ENCODE measurements at regions of chr12 and their contacts with region 1.

Region 1: GRCh38 chr12:91811481-91812287 is 334.0 kb downstream of the BTG1 start:
- DNase-seq: peak; percentile 79
- H3K4me3 ChIP-seq: no peak overlapping the region
- H3K27ac ChIP-seq: no peak overlapping the region
- H3K4me1 ChIP-seq: no peaks in the 10 kb centered on the region
- H3K27me3 ChIP-seq: no peaks in the 10 kb centered on the region
- CTCF ChIP-seq: peak; percentile 60 to 72
- POLR2A ChIP-seq: no peak

Region 2: DNA sequence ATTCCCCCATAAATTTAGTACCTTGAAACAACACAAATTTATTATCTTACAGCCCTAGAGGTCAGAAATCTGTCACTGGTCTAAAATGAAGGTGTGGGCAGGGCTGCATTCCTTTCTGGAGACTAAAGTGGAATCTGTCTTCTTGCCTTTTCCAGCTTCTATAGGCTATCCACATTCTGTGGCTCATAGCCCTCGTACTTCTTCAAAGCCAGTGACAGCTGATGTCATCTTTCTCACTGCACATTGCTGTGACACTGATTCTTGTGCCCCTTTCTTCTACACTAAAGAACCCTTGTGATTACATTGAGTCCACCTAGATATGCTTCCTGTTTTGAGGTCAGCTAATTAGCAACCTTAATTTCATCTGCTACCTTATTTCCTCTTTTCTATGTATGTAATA is 605.9 kb before region 1 on chr12:
- CTCF ChIA-PET with region 1: no interaction called
- POLR2A ChIA-PET with region 1: no interaction called
- dilution Hi-C with region 1: no loop called
- intact Hi-C with region 1: no loop called
- DNase-seq: no peak
- H3K4me3 ChIP-seq: no peak overlapping the region
- H3K27ac ChIP-seq: no peak overlapping the region
- H3K4me1 ChIP-seq: no peaks in the 10 kb centered on the region
- H3K27me3 ChIP-seq: no peaks in the 10 kb centered on the region
- CTCF ChIP-seq: no peak
- POLR2A ChIP-seq: no peak

Region 3: GRCh38 chr12:91289906-91290305 is 521.8 kb before region 1 on chr12:
- CTCF ChIA-PET with region 1: no interaction called
- POLR2A ChIA-PET with region 1: no interaction called
- dilution Hi-C with region 1: no loop called
- intact Hi-C with region 1: no loop called
- DNase-seq: peak; percentile 36
- H3K4me3 ChIP-seq: no peak overlapping the region
- H3K27ac ChIP-seq: no peak overlapping the region
- H3K4me1 ChIP-seq: no peaks in the 10 kb centered on the region
- H3K27me3 ChIP-seq: no peaks in the 10 kb centered on the region
- CTCF ChIP-seq: no peak
- POLR2A ChIP-seq: no peak

Region 4: DNA sequence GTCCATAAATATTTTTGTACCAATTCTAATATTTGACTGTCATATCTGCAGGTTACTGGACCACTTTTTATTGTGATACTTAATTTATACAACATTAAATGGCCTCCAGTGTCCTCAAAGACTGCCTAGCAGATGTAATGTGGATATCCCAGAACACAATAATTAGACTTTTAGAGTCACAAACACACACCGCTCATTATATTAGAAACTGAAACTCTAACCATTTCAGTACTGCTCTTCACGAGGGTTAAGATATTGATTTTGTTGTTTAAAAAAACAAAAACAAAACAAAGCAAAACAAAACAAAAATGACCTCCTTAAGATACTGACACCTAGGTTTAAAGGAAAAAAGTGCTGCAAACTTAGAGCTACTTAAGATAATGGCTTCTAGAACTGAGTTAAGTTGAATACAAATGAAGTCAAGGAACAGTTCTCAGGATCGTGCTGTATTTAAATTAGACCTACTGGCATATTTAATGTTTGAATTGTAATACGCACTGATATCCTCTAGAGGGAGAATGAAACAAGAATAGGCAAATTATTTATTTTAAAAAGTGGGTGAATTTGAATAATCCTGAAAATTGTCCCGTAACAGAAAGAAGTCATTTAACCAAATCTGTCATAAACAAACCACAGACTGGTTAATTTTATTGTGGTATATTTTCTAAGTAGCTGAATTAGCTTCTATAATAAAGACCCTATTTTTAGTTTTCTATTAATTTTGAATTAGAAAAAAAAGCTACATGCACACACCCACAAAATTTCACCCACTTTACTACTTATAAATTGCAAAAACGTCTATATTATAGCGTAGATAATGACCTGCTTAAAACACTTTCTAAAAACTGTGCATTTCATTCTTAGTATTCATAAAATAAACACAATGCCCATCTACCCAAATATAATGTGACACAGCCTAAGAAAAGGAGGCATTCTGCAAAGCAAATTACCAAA is 233.8 kb before region 1 on chr12:
- CTCF ChIA-PET with region 1: interaction called, 11 read pairs
- POLR2A ChIA-PET with region 1: no interaction called
- dilution Hi-C with region 1: no loop called
- intact Hi-C with region 1: no loop called
- DNase-seq: peak; percentile 61
- H3K4me3 ChIP-seq: peak overlapping the region in 1 of 3 experiments; percentile 73
- H3K27ac ChIP-seq: no peak overlapping the region
- H3K4me1 ChIP-seq: peaks cover 4% of the 10 kb centered on the region
- H3K27me3 ChIP-seq: no peaks in the 10 kb centered on the region
- CTCF ChIP-seq: peak; percentile 20 to 21
- POLR2A ChIP-seq: no peak

Region 5: DNA sequence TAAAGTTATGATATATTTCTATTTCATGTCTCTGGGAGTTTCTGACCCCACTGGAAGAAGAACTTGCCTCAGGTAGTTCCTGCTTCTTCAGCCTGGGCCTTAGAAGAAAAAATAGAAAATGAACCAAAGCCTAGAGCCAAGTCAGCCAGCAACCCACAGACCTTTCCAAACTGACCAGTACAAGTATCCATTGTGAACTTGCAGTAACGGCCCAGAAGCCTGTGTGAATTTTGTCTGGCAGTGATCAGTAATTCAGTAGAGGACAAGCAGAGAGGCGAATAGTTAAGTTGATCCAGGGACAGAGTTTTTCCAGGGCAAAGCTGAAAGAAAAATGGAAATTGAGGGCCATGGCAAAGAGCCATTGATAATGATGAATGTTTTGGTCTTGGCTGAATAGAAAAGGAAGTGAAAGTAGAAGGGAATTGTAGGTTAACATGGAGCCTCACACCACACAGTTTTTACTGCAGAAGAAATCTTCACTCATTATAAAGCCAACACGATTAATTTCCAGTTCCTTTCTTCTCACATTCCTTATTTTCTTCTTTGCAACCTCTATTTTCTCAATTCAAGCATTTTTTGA is 22.2 kb after region 1 on chr12:
- CTCF ChIA-PET with region 1: interaction called, 11 read pairs
- POLR2A ChIA-PET with region 1: no interaction called
- dilution Hi-C with region 1: no loop called
- intact Hi-C with region 1: no loop called
- DNase-seq: peak; percentile 7
- H3K4me3 ChIP-seq: no peak overlapping the region
- H3K27ac ChIP-seq: no peak overlapping the region
- H3K4me1 ChIP-seq: no peaks in the 10 kb centered on the region
- H3K27me3 ChIP-seq: no peaks in the 10 kb centered on the region
- CTCF ChIP-seq: no peak
- POLR2A ChIP-seq: no peak

Region 6: GRCh38 chr12:91985002-91985787 is 173.5 kb after region 1 on chr12:
- CTCF ChIA-PET with region 1: interaction called, 29 read pairs
- POLR2A ChIA-PET with region 1: no interaction called
- dilution Hi-C with region 1: no loop called
- intact Hi-C with region 1: loop called (anchors 2 kb)
- DNase-seq: peak; percentile 13
- H3K4me3 ChIP-seq: no peak overlapping the region
- H3K27ac ChIP-seq: no peak overlapping the region
- H3K4me1 ChIP-seq: peaks cover 55% of the 10 kb centered on the region
- H3K27me3 ChIP-seq: no peaks in the 10 kb centered on the region
- CTCF ChIP-seq: no peak
- POLR2A ChIP-seq: no peak

Region 7: DNA sequence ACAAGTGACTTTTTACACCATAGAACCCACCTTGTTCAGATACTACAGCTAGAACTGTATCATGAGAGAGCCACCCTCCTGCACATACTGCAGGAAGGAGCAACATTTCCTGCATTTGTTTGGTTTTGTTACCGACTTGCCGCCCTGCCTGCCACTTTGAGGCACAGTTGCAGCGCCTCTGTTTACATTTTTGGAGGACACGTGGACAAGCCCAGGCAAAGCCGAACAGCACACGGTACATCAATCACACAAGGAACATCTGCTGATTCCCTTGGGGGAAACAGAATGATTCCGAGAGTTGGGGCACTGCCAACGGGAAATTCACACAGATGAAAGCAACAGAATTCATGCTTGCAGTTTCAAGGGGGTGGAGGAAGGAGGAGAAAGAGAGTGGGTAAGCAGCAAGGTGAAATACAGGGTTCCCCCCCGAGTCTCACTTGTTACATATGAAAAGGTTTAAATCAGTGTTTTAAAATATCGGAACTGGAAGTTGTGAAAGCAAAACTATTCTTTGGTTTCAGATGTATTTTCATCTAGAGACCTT is 223.2 kb after region 1 on chr12:
- CTCF ChIA-PET with region 1: interaction called, 10 read pairs
- POLR2A ChIA-PET with region 1: no interaction called
- dilution Hi-C with region 1: no loop called
- intact Hi-C with region 1: no loop called
- DNase-seq: peak; percentile 87
- H3K4me3 ChIP-seq: peak overlapping the region in 1 of 3 experiments; percentile 21
- H3K27ac ChIP-seq: peak overlapping the region; percentile 22
- H3K4me1 ChIP-seq: peaks cover 17% of the 10 kb centered on the region
- H3K27me3 ChIP-seq: no peaks in the 10 kb centered on the region
- CTCF ChIP-seq: no peak
- POLR2A ChIP-seq: no peak

Region 8: DNA sequence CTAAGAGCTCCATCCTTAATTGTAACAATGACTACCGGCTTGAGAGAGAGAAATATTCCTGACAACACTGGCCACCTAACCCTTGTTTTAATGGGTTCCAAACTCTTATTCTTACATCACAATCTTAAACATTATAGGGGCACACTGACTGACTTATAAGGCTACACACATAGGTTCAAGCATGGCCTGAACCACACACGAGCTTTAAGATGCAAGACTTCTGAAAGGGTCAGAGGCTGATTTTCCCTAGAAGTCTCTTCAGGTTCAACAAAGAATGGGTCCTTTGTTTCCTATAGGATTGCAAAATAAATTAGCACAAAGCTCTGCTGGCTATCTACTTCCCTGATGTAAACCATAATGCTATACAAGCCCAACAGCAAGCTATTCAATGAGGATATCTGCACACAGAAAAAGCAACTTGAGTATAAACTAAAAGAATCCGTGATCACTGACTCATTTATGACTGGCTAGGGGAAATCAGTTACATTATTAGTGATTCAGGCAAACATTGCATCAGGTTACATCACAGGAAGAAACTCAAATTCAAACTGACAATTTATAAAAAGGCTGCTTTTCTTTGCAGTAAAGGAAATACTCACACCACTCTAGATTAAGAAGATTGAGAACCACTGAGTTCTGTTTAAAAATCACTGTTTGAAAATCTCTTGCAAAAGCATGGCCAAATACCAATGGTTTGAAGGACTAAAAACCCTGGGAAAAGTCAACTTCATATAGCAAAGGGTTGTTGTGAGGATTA is 325.5 kb after region 1 on chr12:
- CTCF ChIA-PET with region 1: interaction called, 111 read pairs
- POLR2A ChIA-PET with region 1: interaction called, 6 read pairs
- dilution Hi-C with region 1: no loop called
- intact Hi-C with region 1: no loop called
- DNase-seq: peak; percentile 68
- H3K4me3 ChIP-seq: no peak overlapping the region
- H3K27ac ChIP-seq: peak overlapping the region; percentile 49
- H3K4me1 ChIP-seq: peaks cover 59% of the 10 kb centered on the region
- H3K27me3 ChIP-seq: no peaks in the 10 kb centered on the region
- CTCF ChIP-seq: no peak
- POLR2A ChIP-seq: no peak

Region 9: DNA sequence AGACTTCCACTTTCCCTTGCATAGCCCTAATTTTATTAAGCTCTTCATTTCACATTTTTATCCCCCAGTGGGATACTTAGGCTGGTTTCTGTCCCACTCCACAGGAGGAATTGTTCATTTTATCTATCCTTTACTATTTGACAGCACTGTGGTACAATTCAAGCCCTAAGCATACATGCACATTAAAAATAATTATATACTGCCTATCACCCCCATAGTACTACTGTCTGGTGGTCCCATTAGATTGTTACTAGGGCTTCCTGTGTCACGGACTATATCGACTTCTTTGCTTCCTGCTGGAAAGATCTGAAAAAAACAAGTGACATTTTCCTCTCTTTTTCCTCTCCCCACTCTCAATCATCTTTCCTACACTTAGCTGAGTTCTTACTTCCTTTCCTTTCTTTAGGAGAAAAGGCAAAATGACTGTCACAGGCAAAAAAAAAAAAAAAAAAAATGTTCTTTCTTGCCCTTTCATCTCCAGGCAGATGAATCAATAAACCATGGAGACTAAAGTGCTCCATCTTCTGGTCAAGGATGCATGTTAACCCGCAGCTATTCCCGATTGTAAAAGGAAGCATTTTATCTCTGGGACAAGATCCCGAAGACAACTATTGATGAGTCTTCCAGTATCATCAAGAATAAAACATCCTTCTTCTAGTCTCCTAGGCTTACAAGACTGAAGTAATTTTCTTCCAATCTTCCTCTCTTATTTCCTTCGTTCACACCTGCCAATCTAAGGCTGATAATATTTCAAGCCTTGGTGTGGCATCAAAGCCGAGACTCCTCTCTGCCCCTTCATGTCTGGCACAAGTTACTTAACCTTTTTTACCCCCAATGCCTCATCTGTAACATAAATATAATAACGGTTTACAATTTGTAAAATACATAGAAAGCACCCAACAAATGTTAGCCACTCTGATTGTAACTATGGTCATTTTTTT is 796.7 kb after region 1 on chr12:
- CTCF ChIA-PET with region 1: interaction called, 10 read pairs
- POLR2A ChIA-PET with region 1: no interaction called
- dilution Hi-C with region 1: no loop called
- intact Hi-C with region 1: no loop called
- DNase-seq: peak; percentile 62
- H3K4me3 ChIP-seq: no peak overlapping the region
- H3K27ac ChIP-seq: no peak overlapping the region
- H3K4me1 ChIP-seq: peaks cover 4% of the 10 kb centered on the region
- H3K27me3 ChIP-seq: no peaks in the 10 kb centered on the region
- CTCF ChIP-seq: peak; percentile 34 to 38
- POLR2A ChIP-seq: no peak